AG04449 (cell line): ENCODE measurements at regions of chr17 and their contacts with region 1.

Region 1: DNA sequence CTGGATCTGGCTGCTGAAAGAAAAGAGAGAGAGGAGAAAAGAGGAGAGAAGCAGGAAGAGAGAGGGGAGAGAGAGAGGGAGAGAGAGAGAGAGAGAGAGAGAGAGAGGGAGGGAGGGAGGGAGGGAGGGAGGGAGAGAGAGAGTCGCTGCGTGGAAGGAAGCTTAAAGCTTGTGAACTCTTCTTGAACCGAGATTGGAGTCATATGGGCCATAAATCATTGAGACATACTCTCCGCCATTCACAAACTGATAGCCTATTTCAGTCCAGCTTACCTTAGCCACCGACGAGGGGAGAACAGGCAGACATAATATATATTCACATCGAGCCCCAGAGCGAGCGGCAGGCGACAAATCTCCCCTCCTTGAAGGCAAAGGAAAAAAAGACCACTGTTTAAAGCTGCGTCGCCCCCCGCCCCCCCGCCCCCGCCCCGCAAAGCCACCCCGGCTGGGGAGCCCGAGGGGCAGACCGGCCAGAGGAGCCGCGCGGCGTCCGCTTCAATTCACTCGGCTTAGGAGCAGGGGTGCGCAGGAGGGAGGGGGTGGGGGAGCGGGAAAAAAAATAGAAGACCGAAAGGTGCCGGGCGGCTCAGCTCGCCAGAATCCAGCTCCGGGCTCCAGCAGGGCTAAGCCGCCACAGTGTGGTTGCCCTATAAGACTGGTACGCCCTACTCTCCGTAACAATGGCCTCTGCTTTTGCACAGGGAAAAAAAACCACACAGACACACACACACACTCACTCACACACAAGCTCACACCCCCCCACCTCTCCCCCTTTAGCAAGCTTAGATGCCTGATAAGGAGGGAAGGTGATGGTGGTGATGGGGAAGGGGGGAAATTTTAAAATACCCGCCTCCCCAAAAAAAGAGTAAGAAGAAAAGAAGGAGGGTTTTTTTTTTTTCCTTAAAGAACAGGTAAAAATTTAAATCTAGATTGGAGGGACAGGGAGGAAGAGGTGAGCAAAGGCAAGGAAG is 10.6 kb upstream of the HOXB2 start:
- DNase-seq: peak; percentile 94
- H3K4me3 ChIP-seq: peak overlapping the region; percentile 56
- CTCF ChIP-seq: no peak

Region 2: DNA sequence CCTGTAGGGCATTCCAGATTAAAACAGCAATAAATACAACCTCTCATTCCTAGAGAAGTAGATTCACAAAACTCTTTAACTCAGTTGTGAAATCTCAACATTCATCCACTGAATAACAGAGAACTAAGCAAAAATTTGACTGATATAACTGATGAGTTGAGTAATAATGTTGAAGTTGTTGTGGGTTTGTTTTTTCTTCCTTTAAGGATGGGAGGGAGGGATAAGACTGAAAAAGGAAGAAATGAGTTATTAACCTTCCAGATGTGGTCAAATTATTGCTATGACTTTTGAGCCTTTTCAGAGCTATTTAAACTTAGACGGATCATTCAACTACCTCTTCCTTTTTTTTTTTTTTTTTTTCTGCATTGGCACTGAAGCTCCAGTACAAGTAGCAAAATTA is 164.1 kb before region 1 on chr17:
- CTCF ChIA-PET with region 1: no interaction called
- POLR2A ChIA-PET with region 1: no interaction called
- DNase-seq: no peak
- H3K4me3 ChIP-seq: no peak overlapping the region
- CTCF ChIP-seq: no peak

Region 3: GRCh38 chr17:48543107-48543853 is 12.3 kb before region 1 on chr17:
- CTCF ChIA-PET with region 1: interaction called, 10 read pairs
- POLR2A ChIA-PET with region 1: interaction called, 8 read pairs
- DNase-seq: no peak
- H3K4me3 ChIP-seq: peak overlapping the region; percentile 84
- CTCF ChIP-seq: no peak

Region 4: DNA sequence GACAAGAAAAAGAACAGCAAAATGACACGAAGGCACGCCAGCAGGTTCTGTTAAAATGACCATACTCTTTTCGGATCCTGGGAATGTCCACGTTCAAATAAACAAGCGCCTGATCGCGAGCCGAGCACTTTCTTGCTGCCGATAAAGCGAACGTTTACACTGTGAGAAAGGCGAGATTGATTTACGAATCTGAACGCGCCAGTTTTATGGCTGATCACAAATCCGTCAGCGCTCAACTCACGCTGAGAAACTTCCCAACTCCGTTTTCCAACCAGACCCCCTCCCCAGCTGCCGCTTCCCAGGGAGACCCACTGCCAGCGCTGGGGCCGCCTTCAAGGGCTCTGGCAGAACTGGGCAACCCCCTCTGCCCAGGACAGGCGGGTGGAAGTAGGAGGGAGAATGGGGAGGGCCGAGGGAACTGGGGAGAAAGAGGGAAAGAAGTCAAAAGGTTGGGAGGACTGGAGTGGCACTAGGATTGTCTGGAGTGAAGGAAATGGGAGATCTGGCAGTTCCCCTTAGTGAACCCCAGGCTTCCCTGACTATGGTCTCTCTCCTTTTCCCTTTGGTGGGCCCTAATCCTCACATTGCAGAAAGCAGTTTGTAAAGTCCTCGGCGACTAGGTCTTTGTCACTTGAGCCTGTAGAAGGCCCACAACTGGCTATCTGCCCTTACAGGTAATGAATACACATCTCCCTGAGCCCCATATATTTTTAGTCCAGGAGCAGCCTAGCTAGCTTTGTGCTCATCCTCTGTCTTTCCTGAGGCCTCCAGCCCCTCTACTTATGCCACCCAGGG is 15.7 kb after region 1 on chr17:
- CTCF ChIA-PET with region 1: interaction called, 22 read pairs
- POLR2A ChIA-PET with region 1: interaction called, 17 read pairs
- DNase-seq: no peak
- H3K4me3 ChIP-seq: peak overlapping the region; percentile 54
- CTCF ChIP-seq: no peak